ENCODE measurements at regions of chr6 and their contacts with region 1.

Region 1: DNA sequence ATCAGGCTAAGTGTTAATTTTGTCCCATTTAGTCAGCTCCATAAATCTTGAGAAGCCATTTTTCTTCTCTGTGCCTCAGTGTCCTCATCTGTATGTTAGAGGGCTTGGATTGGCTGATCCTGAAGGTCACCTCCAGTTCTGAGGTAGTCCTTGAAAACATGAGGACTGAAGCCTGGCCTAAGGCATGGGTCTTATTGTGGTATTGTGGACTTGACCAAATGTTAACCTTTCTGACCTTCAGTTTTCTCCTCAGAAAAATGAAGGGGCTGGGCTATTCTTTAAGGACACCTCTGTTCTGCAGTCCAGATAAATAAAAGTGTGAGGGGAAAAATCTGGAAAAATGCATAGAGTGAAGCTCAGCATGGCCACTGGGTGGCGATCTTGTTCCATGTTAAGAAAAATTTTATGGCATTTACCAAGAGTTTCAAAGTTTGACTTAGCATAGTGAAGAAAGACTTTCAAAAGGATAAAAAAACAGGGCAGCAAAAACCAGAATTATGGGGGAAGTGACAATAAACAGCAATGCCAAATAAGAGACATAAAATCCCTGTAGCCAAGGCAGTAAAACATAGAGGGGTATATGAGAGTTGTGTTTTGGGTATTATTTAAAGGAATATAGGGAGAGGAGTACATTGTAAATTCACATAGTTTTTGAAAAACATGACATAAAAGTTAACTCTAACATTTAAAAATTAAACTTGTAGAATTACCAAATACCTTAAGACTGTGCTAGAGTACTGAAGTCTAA is 13.2 kb upstream of the TFB1M start:
- DNase-seq: peak; percentile 40
- CTCF ChIP-seq: peak; percentile 57

Region 2: DNA sequence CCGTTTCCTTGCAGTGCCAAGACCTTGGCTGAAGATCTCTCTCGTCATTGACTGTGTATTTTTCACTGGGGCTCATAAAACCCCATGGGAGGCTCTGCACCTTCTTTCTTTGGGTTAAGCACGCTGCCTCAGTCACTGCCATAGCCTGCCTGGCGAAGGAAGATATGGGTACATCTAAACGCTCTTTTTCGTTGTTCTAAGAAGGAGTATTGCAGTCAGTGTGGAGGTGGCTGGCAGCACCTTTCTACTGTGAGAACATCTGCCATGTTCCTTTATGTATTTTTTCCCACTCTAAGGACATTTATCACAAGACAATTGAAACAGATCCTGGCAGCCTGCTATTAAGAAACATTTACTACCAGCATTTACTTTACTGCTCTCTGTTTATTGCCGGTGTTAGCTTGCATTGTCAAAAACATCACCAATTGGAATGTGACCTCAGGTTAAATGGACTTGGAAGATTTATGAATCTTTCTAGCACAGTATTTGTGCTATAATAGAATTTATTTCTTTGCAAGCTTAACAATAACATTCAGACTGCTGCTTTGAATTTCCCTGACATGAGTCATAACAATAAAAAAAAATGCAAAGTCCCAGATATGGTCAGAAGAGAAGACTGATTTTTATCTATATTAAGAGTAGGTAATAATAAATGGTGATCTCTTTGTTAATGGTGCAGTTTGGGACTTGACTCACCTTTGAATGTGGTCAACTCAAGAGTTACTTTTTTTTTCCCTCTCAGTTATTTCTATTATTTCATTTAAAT is 125.9 kb before region 1 on chr6:
- in situ Hi-C with region 1: no loop called
- DNase-seq: no peak
- CTCF ChIP-seq: no peak

Region 3: DNA sequence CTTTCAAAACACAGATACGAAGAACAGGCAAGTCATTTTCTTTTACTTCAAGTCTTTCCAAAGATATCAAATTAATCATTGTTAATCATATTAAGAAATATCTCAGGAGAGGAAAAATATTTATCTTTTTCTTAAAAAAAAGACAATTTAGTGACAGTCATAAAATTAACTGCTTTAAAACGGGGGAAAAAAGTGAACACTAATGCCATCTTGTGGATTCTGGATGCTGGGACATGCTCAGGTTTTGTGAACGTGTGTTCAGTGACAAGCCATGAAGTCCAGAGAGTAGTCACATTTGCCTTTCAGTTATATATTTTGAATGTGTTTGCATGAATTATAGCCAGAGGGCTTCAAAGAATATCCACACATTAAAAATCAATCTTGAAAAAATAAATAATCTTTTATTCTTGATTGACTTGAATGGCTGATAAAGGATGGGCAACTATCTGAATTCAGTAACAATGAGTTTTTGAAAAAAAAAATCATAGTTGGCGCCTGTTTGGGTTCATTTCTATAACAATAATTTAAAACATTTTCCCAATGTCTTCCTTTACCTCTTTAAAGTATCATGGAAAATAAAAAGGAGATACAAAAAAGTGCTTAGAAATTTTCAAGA is 202.8 kb after region 1 on chr6:
- in situ Hi-C with region 1: loop called (anchors 5 kb)
- DNase-seq: peak; percentile 37
- CTCF ChIP-seq: peak; percentile 46

Measured in GM13976 (cell line).